A673 (cell line): ENCODE measurements at regions of chr5 and their contacts with region 1.

Region 1: GRCh38 chr5:90434116-90434714 is 24.7 kb upstream of the CETN3 start:
- DNase-seq: peak; percentile 67
- H3K4me3 ChIP-seq: no peak overlapping the region
- H3K27ac ChIP-seq: no peak overlapping the region
- H3K4me1 ChIP-seq: no peaks in the 10 kb centered on the region
- H3K27me3 ChIP-seq: no peaks in the 10 kb centered on the region
- CTCF ChIP-seq: peak; percentile 89

Region 2: DNA sequence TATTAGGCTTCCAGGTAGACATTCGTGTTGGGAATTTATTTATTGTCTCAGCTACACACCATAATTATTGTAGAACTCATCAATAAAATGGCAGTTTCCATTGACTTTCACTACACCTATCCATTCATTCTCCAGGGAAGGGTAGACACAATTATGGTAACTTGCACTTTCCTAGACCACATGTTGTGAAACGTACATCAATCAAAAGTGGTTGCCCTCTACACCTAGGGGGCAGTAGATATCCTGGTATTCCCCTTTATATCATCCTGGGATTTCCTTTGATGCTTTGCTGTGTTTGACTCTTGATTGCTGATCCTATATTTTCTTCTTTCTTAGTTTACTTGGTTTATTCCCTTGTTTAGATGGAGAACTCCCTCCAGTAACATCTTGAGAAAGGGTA is 172.3 kb after region 1 on chr5:
- CTCF ChIA-PET with region 1: interaction called, 11 read pairs
- POLR2A ChIA-PET with region 1: no interaction called
- intact Hi-C with region 1: loop called (anchors 2 kb)
- DNase-seq: peak; percentile 40
- H3K4me3 ChIP-seq: no peak overlapping the region
- H3K27ac ChIP-seq: no peak overlapping the region
- H3K4me1 ChIP-seq: no peaks in the 10 kb centered on the region
- H3K27me3 ChIP-seq: peaks cover 9% of the 10 kb centered on the region
- CTCF ChIP-seq: peak; percentile 57